Activated CD4-positive, alpha-beta T cell treated with anti-CD3 and anti-CD28 coated beads, Interleukin-2, amount 10 ng/mL, durations not matched to agents 24 days and 14 days (primary cell): ENCODE measurements at regions of chr12 and their contacts with region 1.

Region 1: DNA sequence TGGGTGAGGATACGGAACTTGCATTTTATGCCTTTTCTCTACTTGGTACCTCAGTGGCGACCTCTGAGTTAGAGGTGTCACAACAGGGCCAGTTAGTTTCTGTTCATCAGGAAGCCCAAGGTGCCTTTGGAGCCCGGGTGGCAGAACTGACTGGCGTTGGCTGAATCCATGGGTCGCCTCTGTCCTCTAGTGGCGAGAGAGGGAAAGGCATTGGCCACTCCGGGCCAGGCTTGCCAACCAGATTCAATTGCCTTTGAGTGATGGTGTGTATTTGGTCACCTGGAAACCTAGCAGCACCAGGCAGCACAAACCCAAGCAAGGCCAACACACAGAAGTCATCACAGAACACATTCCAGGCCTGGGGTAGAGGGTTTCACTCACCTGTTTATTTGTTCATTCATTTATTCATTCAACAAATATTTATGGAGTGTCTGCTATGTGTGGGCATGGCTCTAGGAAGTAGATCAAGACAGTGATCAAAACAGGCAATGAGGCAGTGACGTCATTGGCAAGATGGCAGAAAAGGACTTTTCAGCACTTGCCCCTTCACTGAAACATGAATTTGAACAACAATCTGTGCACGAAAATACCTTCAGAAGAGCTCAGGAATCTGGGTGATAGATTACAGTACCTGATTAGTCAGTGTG is 40.5 kb upstream of the KCNA5 start:
- DNase-seq: peak; percentile 85
- H3K4me3 Mint-ChIP-seq: no peak overlapping the region
- H3K27ac Mint-ChIP-seq: no peak overlapping the region
- H3K4me1 Mint-ChIP-seq: no peaks in the 10 kb centered on the region
- H3K27me3 Mint-ChIP-seq: peaks cover 7% of the 10 kb centered on the region

Region 2: GRCh38 chr12:4857472-4858291 is 145.5 kb before region 1 on chr12:
- intact Hi-C with region 1: loop called (anchors 1 kb)
- DNase-seq: peak; percentile 93
- H3K4me3 Mint-ChIP-seq: peak overlapping the region; percentile 77
- H3K27ac Mint-ChIP-seq: no peak overlapping the region
- H3K4me1 Mint-ChIP-seq: peaks cover 20% of the 10 kb centered on the region
- H3K27me3 Mint-ChIP-seq: peaks cover 33% of the 10 kb centered on the region